GM18951 (cell line): ENCODE measurements at regions of chr10 and their contacts with region 1.

Region 1: GRCh38 chr10:70925377-70926225 is 37.2 kb upstream of the PCBD1 start:
- POLR2A ChIP-seq: no peak

Region 2: GRCh38 chr10:71015674-71016073 is 90.1 kb after region 1 on chr10:
- in situ Hi-C with region 1: no loop called
- POLR2A ChIP-seq: no peak

Region 3: DNA sequence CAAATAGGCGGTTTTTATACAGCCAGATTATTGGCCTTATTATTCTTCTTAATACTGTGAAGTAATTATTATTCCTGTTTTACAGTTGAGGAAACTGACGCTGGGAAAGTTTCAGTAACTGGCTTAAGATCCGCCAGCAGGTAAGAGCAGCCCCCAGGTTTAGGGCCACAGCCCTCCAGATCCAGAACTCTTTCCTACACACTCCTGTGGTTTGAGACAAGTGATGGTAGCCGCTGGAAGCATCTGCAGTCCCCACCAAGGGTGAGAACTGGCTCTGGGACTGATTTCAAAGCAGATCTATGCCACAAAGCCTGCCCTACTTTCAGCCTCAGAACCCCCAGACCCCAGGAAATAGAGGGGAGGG is 283.7 kb after region 1 on chr10:
- in situ Hi-C with region 1: loop called (anchors 10 kb)
- POLR2A ChIP-seq: no peak